Natural killer cell (primary cell): ENCODE measurements at regions of chr1 and their contacts with region 1.

Region 1: DNA sequence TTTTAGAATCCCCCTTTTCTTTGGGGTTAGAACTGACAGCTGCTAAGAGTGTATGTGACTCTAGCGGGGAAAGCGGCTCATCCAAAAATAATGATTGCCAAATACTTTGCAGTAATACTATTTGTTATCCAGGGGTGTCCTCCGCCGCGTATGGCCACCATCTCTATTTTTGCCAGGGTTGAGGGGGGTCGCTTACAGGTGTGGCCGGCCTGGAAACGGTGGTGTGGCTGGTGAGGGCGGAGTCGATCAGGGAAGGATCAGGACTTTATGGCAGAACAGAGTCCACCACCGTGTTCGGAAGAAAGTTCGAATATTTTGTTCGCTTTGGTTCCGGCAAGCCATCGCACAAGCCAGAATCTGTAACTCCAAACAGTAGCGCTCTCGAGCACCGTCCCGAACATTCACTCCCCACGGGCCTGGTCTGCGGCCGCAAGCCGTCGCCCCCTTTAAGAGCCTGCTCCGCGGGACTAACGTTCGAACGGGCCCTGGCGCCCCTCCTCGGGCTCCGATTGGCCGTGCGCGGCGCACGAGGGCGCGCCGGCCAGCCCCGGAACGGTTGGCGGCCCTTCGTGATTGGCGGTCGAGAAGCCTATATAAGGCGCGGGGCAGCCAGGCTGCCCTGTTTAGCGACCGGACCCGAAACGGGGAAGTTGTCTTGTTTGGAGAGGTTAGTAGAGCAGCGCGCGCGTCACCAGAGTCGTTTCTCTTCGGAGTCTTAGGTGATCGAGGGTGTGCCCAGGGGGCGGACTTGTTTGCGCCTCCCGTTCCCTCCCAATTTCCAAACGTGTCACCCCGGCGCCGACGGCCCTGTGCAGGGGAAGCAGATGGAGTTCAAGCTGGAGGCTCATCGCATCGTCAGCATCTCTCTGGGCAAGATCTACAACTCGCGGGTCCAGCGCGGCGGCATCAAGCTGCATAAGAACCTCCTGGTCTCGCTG is at the start of gene IER5:
- DNase-seq: peak; percentile 97 to 98
- ATAC-seq: peak; percentile 71 to 89 (median 76)
- H3K4me3 ChIP-seq: peak within 1 kb of the TSS; percentile 94
- H3K4me3 Mint-ChIP-seq: peak within 1 kb of the TSS; percentile 98
- H3K27ac ChIP-seq: peak within 1 kb of the TSS; percentile 98
- H3K27ac Mint-ChIP-seq: peak within 1 kb of the TSS; percentile 99 to 100
- H3K4me1 ChIP-seq: peaks cover 7% of the 10 kb centered on the region
- H3K4me1 Mint-ChIP-seq: peaks cover 48 to 56% of the 10 kb centered on the region in 2 donors
- H3K27me3 ChIP-seq: no peaks in the 10 kb centered on the region
- H3K27me3 Mint-ChIP-seq: no peaks in the 10 kb centered on the region
- CTCF ChIP-seq: no peak
- total RNA-seq, gene IER5: 118 to 164 (median 150) TPM

Region 2: GRCh38 chr1:180502360-180503273 is 585.7 kb before region 1 on chr1 and contains the start of gene ACBD6:
- intact Hi-C with region 1: loop called (anchors 5 kb)
- DNase-seq: peak; percentile 77 to 92
- ATAC-seq: peak; percentile 84 to 95 (median 91)
- H3K4me3 ChIP-seq: peak within 1 kb of the TSS; percentile 89
- H3K4me3 Mint-ChIP-seq: peak within 1 kb of the TSS; percentile 94
- H3K27ac ChIP-seq: peak within 1 kb of the TSS; percentile 81
- H3K27ac Mint-ChIP-seq: peak within 1 kb of the TSS; percentile 84 to 91
- H3K4me1 ChIP-seq: peaks cover 12% of the 10 kb centered on the region
- H3K4me1 Mint-ChIP-seq: peaks cover 14 to 28% of the 10 kb centered on the region in 2 donors
- H3K27me3 ChIP-seq: no peaks in the 10 kb centered on the region
- H3K27me3 Mint-ChIP-seq: peaks cover 0 to 4% of the 10 kb centered on the region in 2 donors
- CTCF ChIP-seq: no peak
- total RNA-seq, gene ACBD6: 29.8 to 47.3 (median 41.9) TPM

Region 3: DNA sequence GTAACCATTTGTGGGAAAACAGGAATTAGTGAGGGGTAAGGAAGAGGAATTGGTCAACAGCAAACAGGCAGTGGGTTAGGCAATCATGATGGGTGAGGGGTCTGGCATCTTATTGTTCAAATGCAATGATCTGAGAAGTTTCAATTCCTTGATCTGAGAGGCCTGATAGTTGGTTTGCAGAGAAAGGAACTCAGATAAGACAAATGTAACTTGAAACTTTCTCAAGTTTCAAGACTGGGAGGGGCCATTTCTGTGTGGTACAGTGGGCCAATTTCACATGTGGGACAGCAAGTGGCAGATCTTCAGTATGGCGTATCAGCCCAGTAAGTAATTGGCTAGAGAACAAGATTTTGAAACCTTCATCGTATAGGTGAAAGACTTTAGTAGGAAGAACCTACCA is 354.0 kb before region 1 on chr1:
- intact Hi-C with region 1: no loop called
- DNase-seq: no peak
- ATAC-seq: no peak
- H3K4me3 ChIP-seq: no peak overlapping the region
- H3K4me3 Mint-ChIP-seq: no peak overlapping the region
- H3K27ac ChIP-seq: no peak overlapping the region
- H3K27ac Mint-ChIP-seq: no peak overlapping the region
- H3K4me1 ChIP-seq: no peaks in the 10 kb centered on the region
- H3K4me1 Mint-ChIP-seq: peaks cover 0 to 14% of the 10 kb centered on the region in 2 donors
- H3K27me3 ChIP-seq: no peaks in the 10 kb centered on the region
- H3K27me3 Mint-ChIP-seq: no peaks in the 10 kb centered on the region
- CTCF ChIP-seq: no peak

Region 4: DNA sequence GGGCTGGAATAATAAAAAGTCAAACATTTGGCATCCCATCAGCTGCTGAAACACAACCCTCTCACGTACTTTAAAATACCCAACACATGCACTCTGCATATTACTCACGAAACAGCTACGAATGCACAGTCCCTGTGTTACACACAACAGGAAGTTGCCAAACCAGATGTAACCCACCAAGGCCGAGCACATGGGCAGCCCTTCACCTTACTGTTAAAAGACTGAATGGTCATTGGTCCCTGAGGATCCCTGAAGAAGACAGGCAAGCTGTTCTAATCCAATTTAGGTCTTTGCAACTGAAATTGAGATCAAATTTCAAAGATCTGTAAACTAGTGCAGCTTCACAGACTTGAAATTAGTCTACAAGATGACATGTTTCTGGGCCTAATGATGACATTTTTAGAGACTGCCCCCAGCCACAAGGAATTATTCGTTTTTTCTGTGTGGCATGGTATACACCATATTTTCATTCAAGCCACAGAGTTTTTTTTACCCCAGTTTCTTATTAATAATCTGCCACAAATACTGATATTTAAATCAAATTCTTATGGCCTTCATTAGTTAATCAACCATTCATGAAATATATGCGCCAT is 25.4 kb before region 1 on chr1:
- intact Hi-C with region 1: no loop called
- DNase-seq: peak; percentile 37 to 58
- ATAC-seq: peak; percentile 91 to 93 (median 92)
- H3K4me3 ChIP-seq: peak overlapping the region; percentile 35
- H3K4me3 Mint-ChIP-seq: peak overlapping the region; percentile 87
- H3K27ac ChIP-seq: peak overlapping the region; percentile 92
- H3K27ac Mint-ChIP-seq: peak overlapping the region; percentile 91 to 98
- H3K4me1 ChIP-seq: peaks cover 17% of the 10 kb centered on the region
- H3K4me1 Mint-ChIP-seq: peaks cover 24 to 25% of the 10 kb centered on the region in 2 donors
- H3K27me3 ChIP-seq: no peaks in the 10 kb centered on the region
- H3K27me3 Mint-ChIP-seq: no peaks in the 10 kb centered on the region
- CTCF ChIP-seq: no peak

Region 5: DNA sequence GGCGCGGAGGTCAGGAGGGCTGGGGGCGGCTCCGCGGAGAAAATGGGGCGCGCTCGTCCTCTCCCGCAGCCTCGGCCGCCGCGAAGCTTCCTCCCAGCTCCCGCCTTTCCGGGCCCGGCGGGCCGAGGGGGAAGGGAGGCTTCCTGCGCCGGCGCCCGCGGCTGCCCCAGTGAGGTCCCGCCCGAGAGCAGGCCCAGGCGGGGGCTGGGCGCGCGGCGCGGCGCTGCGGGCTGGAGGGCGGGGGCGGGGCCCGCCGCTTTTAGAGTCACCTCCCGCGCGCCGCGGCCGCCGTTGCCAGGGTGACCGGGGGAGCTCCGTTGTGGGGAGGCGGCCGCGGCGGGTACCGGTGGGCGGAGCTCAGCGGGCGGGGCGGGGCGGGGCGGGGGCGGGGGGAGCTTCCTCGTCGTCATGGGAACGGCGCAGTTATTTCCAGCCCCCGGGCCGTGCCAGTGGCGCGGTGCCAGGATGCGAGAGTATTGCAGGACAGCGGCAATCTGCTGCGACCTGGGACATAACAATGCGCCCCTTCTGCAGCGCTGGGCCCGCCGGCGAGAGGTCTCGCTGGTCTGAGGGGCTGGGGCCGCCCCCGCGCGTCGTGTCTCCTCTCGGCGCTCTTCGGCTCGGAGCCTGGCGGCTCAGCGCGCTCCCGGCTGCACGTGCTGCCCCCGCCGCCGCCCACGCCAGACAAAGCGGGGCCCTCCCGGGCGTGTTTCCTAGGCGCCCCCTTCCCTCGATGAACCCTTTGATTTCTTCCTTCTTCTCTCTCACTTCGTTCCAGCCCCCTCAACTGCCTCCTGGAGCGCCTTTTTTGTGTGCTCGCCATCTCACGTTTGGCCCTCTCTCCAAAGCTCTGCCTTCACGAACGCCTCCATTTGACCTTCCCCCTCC is 17.0 kb after region 1 on chr1:
- intact Hi-C with region 1: loop called (anchors 1 kb)
- DNase-seq: peak; percentile 91 to 94
- ATAC-seq: peak; percentile 86 to 95 (median 89)
- H3K4me3 ChIP-seq: peak overlapping the region; percentile 81
- H3K4me3 Mint-ChIP-seq: peak overlapping the region; percentile 93
- H3K27ac ChIP-seq: peak overlapping the region; percentile 80
- H3K27ac Mint-ChIP-seq: peak overlapping the region; percentile 85 to 98
- H3K4me1 ChIP-seq: peaks cover 32% of the 10 kb centered on the region
- H3K4me1 Mint-ChIP-seq: peaks cover 39 to 44% of the 10 kb centered on the region in 2 donors
- H3K27me3 ChIP-seq: no peaks in the 10 kb centered on the region
- H3K27me3 Mint-ChIP-seq: peaks cover 8 to 15% of the 10 kb centered on the region in 2 donors
- CTCF ChIP-seq: no peak

Region 6: GRCh38 chr1:181166377-181167196 is 78.2 kb after region 1 on chr1:
- intact Hi-C with region 1: loop called (anchors 1 kb)
- DNase-seq: peak; percentile 57 to 89
- ATAC-seq: peak; percentile 94 to 100 (median 99)
- H3K4me3 ChIP-seq: no peak overlapping the region
- H3K4me3 Mint-ChIP-seq: no peak overlapping the region
- H3K27ac ChIP-seq: no peak overlapping the region
- H3K27ac Mint-ChIP-seq: no peak overlapping the region
- H3K4me1 ChIP-seq: peaks cover 6% of the 10 kb centered on the region
- H3K4me1 Mint-ChIP-seq: peaks cover 6 to 7% of the 10 kb centered on the region in 2 donors
- H3K27me3 ChIP-seq: no peaks in the 10 kb centered on the region
- H3K27me3 Mint-ChIP-seq: no peaks in the 10 kb centered on the region
- CTCF ChIP-seq: peak; percentile 82

Region 7: GRCh38 chr1:182839209-182840065 is 1751.1 kb after region 1 on chr1 and contains the start of gene DHX9:
- intact Hi-C with region 1: loop called (anchors 10 kb)
- DNase-seq: peak; percentile 97 to 98
- ATAC-seq: peak; percentile 80 to 92 (median 83)
- H3K4me3 ChIP-seq: peak within 1 kb of the TSS; percentile 63
- H3K4me3 Mint-ChIP-seq: peak within 1 kb of the TSS; percentile 99
- H3K27ac ChIP-seq: peak within 1 kb of the TSS; percentile 89
- H3K27ac Mint-ChIP-seq: peak within 1 kb of the TSS; percentile 92 to 94
- H3K4me1 ChIP-seq: peaks cover 21% of the 10 kb centered on the region
- H3K4me1 Mint-ChIP-seq: peaks cover 46 to 55% of the 10 kb centered on the region in 2 donors
- H3K27me3 ChIP-seq: no peaks in the 10 kb centered on the region
- H3K27me3 Mint-ChIP-seq: peaks cover 4 to 8% of the 10 kb centered on the region in 2 donors
- CTCF ChIP-seq: no peak
- total RNA-seq, gene DHX9: 208 to 226 (median 226) TPM